AG04450 (cell line): ENCODE measurements at regions of chr17 and their contacts with region 1.

Region 1: GRCh38 chr17:75779231-75779986 is 5.2 kb upstream of the UNK start:
- DNase-seq: peak; percentile 99
- H3K4me3 ChIP-seq: peak overlapping the region; percentile 90
- H3K27ac ChIP-seq: peak overlapping the region; percentile 99
- H3K27me3 ChIP-seq: no peaks in the 10 kb centered on the region
- CTCF ChIP-seq: no peak

Region 2: GRCh38 chr17:75764711-75765421 is 14.5 kb before region 1 on chr17 and contains the start of gene GALK1:
- CTCF ChIA-PET with region 1: interaction called, 8 read pairs
- POLR2A ChIA-PET with region 1: interaction called, 53 read pairs
- DNase-seq: no peak
- H3K4me3 ChIP-seq: peak within 1 kb of the TSS; percentile 70
- H3K27ac ChIP-seq: peak within 1 kb of the TSS; percentile 31
- H3K27me3 ChIP-seq: peaks cover 4% of the 10 kb centered on the region
- CTCF ChIP-seq: peak; percentile 65
- polyA plus RNA-seq, gene GALK1: 12.4 and 16.8 TPM in 2 replicates

Region 3: DNA sequence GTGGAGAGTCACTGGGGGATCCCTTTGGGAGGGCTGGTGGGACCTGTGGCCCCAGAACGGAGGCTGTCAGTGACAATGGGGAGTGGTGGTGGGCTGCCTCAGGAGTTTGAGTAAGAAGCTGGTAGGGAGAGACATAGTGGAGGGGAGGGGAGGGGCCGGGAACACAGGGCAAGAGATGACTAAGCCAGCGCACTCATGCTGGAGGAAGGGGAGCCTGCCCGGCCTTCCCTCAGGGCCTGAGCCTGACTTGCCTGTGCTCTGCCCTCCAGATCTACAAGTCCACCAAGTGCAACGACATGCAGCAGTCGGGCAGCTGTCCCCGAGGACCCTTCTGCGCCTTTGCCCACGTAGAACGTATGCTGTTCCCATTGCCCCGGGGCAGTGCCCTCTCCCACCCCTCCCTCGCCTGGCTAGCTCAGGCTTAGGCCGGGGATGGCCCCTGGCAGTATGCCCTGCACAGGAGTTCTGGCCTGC is 35.5 kb after region 1 on chr17:
- CTCF ChIA-PET with region 1: interaction called, 9 read pairs
- POLR2A ChIA-PET with region 1: interaction called, 19 read pairs
- DNase-seq: peak; percentile 39
- H3K4me3 ChIP-seq: no peak overlapping the region
- H3K27ac ChIP-seq: peak overlapping the region; percentile 75
- H3K27me3 ChIP-seq: no peaks in the 10 kb centered on the region
- CTCF ChIP-seq: no peak

Region 4: DNA sequence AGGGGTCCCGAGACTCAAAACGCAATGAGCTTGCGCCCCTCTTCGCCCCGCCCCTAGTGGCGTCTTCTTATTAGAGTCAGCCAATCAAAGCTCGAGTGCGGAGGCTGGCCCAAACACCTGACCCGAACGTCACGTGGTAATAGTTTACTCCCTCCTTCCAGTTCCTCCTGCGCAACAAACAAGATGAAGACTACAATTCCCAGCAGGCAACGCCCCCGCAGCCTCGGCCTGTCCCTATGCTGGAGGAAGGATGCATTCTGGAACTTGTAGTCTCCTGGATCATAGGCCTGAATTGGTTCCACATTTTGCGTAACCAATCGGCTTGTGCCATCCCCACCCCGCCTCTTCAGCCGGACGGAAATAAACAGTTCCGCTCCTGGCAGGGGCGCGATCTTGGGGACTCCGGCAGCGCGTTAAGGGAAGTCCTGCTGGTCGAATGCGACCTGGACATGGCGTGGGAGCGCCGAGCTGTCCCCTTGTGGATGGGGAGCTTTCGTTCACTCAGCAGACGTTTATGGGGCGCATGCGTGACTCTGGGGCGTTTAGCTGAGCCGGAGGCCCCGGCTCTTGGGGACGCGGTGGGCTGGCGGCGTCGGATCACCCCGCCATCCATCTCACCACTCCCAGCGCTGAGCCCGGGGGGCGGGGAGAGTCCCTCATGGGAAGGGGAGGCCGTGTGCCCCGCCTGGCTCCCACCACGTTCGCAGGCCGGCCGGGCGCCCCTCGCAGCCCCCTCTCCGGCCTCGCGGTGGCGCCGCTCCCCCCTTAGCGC is 76.1 kb after region 1 on chr17 and contains the start of gene WBP2:
- CTCF ChIA-PET with region 1: interaction called, 6 read pairs
- POLR2A ChIA-PET with region 1: interaction called, 21 read pairs
- DNase-seq: peak; percentile 99
- H3K4me3 ChIP-seq: peak within 1 kb of the TSS; percentile 94
- H3K27ac ChIP-seq: peak within 1 kb of the TSS; percentile 90
- H3K27me3 ChIP-seq: no peaks in the 10 kb centered on the region
- CTCF ChIP-seq: peak; percentile 22; the same call in 1 of the 2 replicates
- polyA plus RNA-seq, gene WBP2: 33.3 and 35.3 TPM in 2 replicates

Region 5: DNA sequence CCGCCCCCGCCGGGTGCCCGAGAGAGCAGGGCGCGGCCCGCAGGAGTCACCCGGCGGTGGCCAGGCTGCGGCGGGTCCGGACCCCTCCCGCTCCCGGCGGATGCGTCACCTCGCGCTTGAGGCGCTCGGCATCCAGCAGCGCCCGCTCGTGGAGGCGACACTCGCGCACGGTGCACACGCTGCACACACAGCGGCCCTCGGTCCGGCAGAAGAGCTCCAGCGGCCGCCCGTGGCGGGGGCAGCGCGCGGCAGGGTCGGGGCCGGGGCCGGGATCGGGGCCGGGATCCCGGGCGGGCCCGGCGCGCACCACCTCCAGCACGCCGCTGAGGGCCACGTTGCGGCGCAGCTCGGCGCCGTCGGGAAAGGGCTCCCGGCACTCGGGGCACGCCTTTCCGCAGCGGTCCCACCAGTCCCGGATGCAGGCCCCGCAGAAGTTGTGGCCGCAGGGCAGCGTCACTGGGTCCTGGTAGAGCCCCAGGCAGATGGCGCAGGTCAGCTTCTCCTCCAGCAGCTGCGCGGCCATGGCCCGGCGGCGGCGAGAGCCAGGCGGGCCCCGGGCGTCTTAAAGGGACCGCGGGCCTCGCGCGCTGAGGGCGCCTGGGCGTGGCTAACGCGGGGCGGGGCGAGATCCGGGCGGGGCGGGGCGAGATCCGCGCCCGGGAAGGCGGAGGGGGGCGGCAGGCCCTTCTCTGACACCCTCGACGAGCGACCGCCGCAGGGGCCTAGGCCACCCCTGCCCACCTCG is 117.2 kb after region 1 on chr17 and contains the start of gene TRIM65:
- CTCF ChIA-PET with region 1: interaction called, 4 read pairs
- POLR2A ChIA-PET with region 1: interaction called, 18 read pairs
- DNase-seq: no peak
- H3K4me3 ChIP-seq: peak within 1 kb of the TSS; percentile 88
- H3K27ac ChIP-seq: peak within 1 kb of the TSS; percentile 31
- H3K27me3 ChIP-seq: no peaks in the 10 kb centered on the region
- CTCF ChIP-seq: no peak
- polyA plus RNA-seq, gene TRIM65: 6.5 and 8.7 TPM in 2 replicates